Endothelial cell of umbilical vein (primary cell): ENCODE measurements at regions of chr1 and their contacts with region 1.

Region 1: GRCh38 chr1:26723013-26723991 is 27.5 kb downstream of the ARID1A start:
- DNase-seq: peak; percentile 99
- H3K4me3 ChIP-seq: no peak overlapping the region
- H3K27ac ChIP-seq: peak overlapping the region; percentile 67
- H3K4me1 ChIP-seq: peaks cover 33% of the 10 kb centered on the region
- H3K27me3 ChIP-seq: no peaks in the 10 kb centered on the region
- CTCF ChIP-seq: no peak
- POLR2A ChIP-seq: peak; percentile 47

Region 2: GRCh38 chr1:26705788-26706311 is 17.5 kb before region 1 on chr1:
- CTCF ChIA-PET with region 1: interaction called, 10 read pairs
- POLR2A ChIA-PET with region 1: no interaction called
- dilution Hi-C with region 1: no loop called
- intact Hi-C with region 1: no loop called
- DNase-seq: peak; percentile 59
- H3K4me3 ChIP-seq: no peak overlapping the region
- H3K27ac ChIP-seq: peak overlapping the region; percentile 26
- H3K4me1 ChIP-seq: peaks cover 44% of the 10 kb centered on the region
- H3K27me3 ChIP-seq: no peaks in the 10 kb centered on the region
- CTCF ChIP-seq: no peak
- POLR2A ChIP-seq: peak; percentile 7

Region 3: GRCh38 chr1:26744075-26744959 is 21.0 kb after region 1 on chr1:
- CTCF ChIA-PET with region 1: interaction called, 17 read pairs
- POLR2A ChIA-PET with region 1: no interaction called
- dilution Hi-C with region 1: no loop called
- intact Hi-C with region 1: loop called (anchors 1 kb)
- DNase-seq: peak; percentile 98
- H3K4me3 ChIP-seq: peak overlapping the region in 1 of 3 experiments; percentile 35
- H3K27ac ChIP-seq: peak overlapping the region; percentile 82
- H3K4me1 ChIP-seq: peaks cover 27% of the 10 kb centered on the region
- H3K27me3 ChIP-seq: no peaks in the 10 kb centered on the region
- CTCF ChIP-seq: no peak
- POLR2A ChIP-seq: peak; percentile 25

Region 4: GRCh38 chr1:26771643-26772321 is 48.5 kb after region 1 on chr1:
- CTCF ChIA-PET with region 1: interaction called, 3 read pairs
- POLR2A ChIA-PET with region 1: interaction called, 6 read pairs
- dilution Hi-C with region 1: no loop called
- intact Hi-C with region 1: loop called (anchors 1 kb)
- DNase-seq: peak; percentile 75
- H3K4me3 ChIP-seq: no peak overlapping the region
- H3K27ac ChIP-seq: peak overlapping the region; percentile 87
- H3K4me1 ChIP-seq: peaks cover 40% of the 10 kb centered on the region
- H3K27me3 ChIP-seq: no peaks in the 10 kb centered on the region
- CTCF ChIP-seq: no peak
- POLR2A ChIP-seq: peak; percentile 30